GM12878 (cell line): ENCODE measurements at regions of chr3 and their contacts with region 1.

Region 1: DNA sequence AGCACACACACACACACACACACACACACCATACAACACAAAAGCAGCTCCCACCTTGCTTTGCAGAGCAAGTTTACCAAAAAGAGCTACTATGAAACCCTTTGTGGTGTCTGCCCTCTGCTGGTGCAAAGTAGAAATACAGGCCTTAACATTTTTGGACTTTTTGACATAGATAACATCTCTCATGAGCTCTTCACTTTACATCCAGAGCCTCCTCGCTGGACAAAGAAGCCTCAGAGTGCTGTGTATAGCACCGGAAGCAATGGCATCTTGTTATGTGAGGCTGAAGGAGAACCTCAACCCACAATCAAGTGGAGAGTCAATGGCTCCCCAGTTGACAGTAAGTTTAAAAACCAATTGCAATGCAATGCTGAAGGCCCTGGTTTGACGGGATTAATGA is 157.9 kb downstream of the CHL1 start:
- DNase-seq: peak; percentile 60
- ATAC-seq: peak; percentile 87
- H3K4me3 ChIP-seq: no peak overlapping the region
- H3K27ac ChIP-seq: no peak overlapping the region
- H3K4me1 ChIP-seq: no peaks in the 10 kb centered on the region
- H3K27me3 ChIP-seq: no peaks in the 10 kb centered on the region
- CTCF ChIP-seq: peak; percentile 72 to 84 (median 76)
- EP300 ChIP-seq: no peak
- POLR2A ChIP-seq: no peak
- RAD21 ChIP-seq: peak; percentile 94

Region 2: GRCh38 chr3:11734-12133 is 342.7 kb before region 1 on chr3:
- CTCF ChIA-PET with region 1: interaction called, 10 read pairs
- POLR2A ChIA-PET with region 1: no interaction called
- RAD21 ChIA-PET with region 1: interaction called, 17 read pairs
- SMC1A ChIA-PET with region 1: interaction called, 6 read pairs
- in situ Hi-C with region 1: no loop called
- intact Hi-C with region 1: no loop called
- DNase-seq: no peak
- ATAC-seq: no peak
- H3K4me3 ChIP-seq: no peak overlapping the region
- H3K27ac ChIP-seq: no peak overlapping the region
- H3K4me1 ChIP-seq: no peaks in the 10 kb centered on the region
- H3K27me3 ChIP-seq: no peaks in the 10 kb centered on the region
- CTCF ChIP-seq: no peak
- EP300 ChIP-seq: no peak
- POLR2A ChIP-seq: no peak
- RAD21 ChIP-seq: no peak

Region 3: GRCh38 chr3:72776-73175 is 281.7 kb before region 1 on chr3:
- CTCF ChIA-PET with region 1: interaction called, 15 read pairs
- POLR2A ChIA-PET with region 1: no interaction called
- RAD21 ChIA-PET with region 1: interaction called, 3 read pairs
- SMC1A ChIA-PET with region 1: interaction called, 21 read pairs
- in situ Hi-C with region 1: no loop called
- intact Hi-C with region 1: no loop called
- DNase-seq: no peak
- ATAC-seq: peak; percentile 56
- H3K4me3 ChIP-seq: no peak overlapping the region
- H3K27ac ChIP-seq: no peak overlapping the region
- H3K4me1 ChIP-seq: no peaks in the 10 kb centered on the region
- H3K27me3 ChIP-seq: no peaks in the 10 kb centered on the region; a peak in 1 of 4 replicates
- CTCF ChIP-seq: no peak
- EP300 ChIP-seq: no peak
- POLR2A ChIP-seq: no peak
- RAD21 ChIP-seq: no peak

Region 4: DNA sequence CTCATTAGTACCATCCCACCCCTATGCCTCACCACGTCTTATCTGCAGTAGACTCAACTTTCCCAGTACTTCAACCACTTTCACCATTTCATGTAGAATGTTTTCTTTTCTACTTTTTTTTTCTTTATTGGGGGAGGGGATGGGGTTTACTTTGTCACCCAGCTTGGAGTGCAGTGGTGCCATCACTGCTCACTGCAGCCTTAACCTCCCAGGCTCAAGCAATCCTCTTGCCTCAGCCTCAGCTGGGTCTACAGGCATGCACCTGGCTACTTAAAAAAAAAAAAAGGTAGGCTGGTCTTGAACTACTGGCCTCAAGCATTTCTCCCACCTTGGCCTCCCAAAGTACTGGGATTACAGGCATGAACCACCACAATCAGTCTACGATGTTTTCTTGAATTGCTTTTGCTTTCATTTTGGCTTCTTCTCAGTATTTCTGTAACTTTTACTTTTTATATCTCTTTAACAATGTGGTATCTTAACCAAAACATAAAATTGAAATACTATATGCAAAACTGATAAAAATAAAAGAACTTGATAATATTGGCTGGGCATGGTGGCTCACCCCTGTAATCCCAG is 202.7 kb before region 1 on chr3:
- CTCF ChIA-PET with region 1: interaction called, 14 read pairs
- POLR2A ChIA-PET with region 1: no interaction called
- RAD21 ChIA-PET with region 1: interaction called, 13 read pairs
- SMC1A ChIA-PET with region 1: interaction called, 26 read pairs
- in situ Hi-C with region 1: no loop called
- intact Hi-C with region 1: no loop called
- DNase-seq: no peak
- ATAC-seq: peak; percentile 67
- H3K4me3 ChIP-seq: no peak overlapping the region
- H3K27ac ChIP-seq: no peak overlapping the region
- H3K4me1 ChIP-seq: no peaks in the 10 kb centered on the region
- H3K27me3 ChIP-seq: no peaks in the 10 kb centered on the region
- CTCF ChIP-seq: no peak
- EP300 ChIP-seq: no peak
- POLR2A ChIP-seq: no peak
- RAD21 ChIP-seq: no peak

Region 5: GRCh38 chr3:212432-212831 is 142.0 kb before region 1 on chr3:
- CTCF ChIA-PET with region 1: interaction called, 69 read pairs
- POLR2A ChIA-PET with region 1: no interaction called
- RAD21 ChIA-PET with region 1: interaction called, 58 read pairs
- SMC1A ChIA-PET with region 1: interaction called, 109 read pairs
- in situ Hi-C with region 1: no loop called
- intact Hi-C with region 1: no loop called
- DNase-seq: peak; percentile 50
- ATAC-seq: peak; percentile 89
- H3K4me3 ChIP-seq: no peak overlapping the region
- H3K27ac ChIP-seq: no peak overlapping the region
- H3K4me1 ChIP-seq: no peaks in the 10 kb centered on the region
- H3K27me3 ChIP-seq: no peaks in the 10 kb centered on the region
- CTCF ChIP-seq: no peak
- EP300 ChIP-seq: peak in 1 of 2 experiments; percentile 46; a peak in 1 of 4 replicates
- POLR2A ChIP-seq: no peak
- RAD21 ChIP-seq: no peak

Region 6: GRCh38 chr3:288417-288816 is 66.0 kb before region 1 on chr3:
- CTCF ChIA-PET with region 1: interaction called, 32 read pairs
- POLR2A ChIA-PET with region 1: no interaction called
- RAD21 ChIA-PET with region 1: interaction called, 53 read pairs
- SMC1A ChIA-PET with region 1: interaction called, 64 read pairs
- in situ Hi-C with region 1: no loop called
- intact Hi-C with region 1: no loop called
- DNase-seq: no peak
- ATAC-seq: no peak
- H3K4me3 ChIP-seq: no peak overlapping the region
- H3K27ac ChIP-seq: no peak overlapping the region
- H3K4me1 ChIP-seq: peaks cover 10% of the 10 kb centered on the region
- H3K27me3 ChIP-seq: no peaks in the 10 kb centered on the region
- CTCF ChIP-seq: no peak
- EP300 ChIP-seq: no peak
- POLR2A ChIP-seq: no peak
- RAD21 ChIP-seq: no peak

Region 7: DNA sequence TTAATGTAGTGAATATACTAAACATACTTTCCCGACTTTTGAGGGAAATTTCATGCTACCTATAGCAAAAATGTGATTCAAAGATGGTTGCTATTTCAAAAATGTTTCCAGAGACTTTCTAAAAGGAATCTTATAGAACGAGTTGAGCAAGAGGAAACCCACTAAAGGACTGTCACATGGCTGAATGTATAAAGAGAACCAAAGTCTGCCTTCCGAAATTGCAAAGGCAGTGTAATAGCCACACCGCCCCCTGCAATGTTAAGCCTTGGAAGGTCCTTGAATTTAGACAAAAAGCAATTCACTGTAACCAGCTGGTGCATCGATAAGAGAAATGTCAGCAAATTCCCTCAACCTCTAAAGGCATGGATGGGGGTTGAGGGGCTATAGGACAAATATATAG is 15.1 kb before region 1 on chr3:
- CTCF ChIA-PET with region 1: interaction called, 18 read pairs
- POLR2A ChIA-PET with region 1: no interaction called
- RAD21 ChIA-PET with region 1: interaction called, 11 read pairs
- SMC1A ChIA-PET with region 1: interaction called, 17 read pairs
- in situ Hi-C with region 1: no loop called
- intact Hi-C with region 1: no loop called
- DNase-seq: no peak
- ATAC-seq: no peak
- H3K4me3 ChIP-seq: no peak overlapping the region
- H3K27ac ChIP-seq: no peak overlapping the region
- H3K4me1 ChIP-seq: no peaks in the 10 kb centered on the region
- H3K27me3 ChIP-seq: no peaks in the 10 kb centered on the region
- CTCF ChIP-seq: no peak
- EP300 ChIP-seq: no peak
- POLR2A ChIP-seq: no peak
- RAD21 ChIP-seq: no peak

Region 8: GRCh38 chr3:514192-514591 is 159.8 kb after region 1 on chr3:
- CTCF ChIA-PET with region 1: no interaction called
- POLR2A ChIA-PET with region 1: no interaction called
- RAD21 ChIA-PET with region 1: no interaction called
- SMC1A ChIA-PET with region 1: no interaction called
- in situ Hi-C with region 1: no loop called
- intact Hi-C with region 1: no loop called
- DNase-seq: no peak
- ATAC-seq: no peak
- H3K4me3 ChIP-seq: no peak overlapping the region
- H3K27ac ChIP-seq: no peak overlapping the region
- H3K4me1 ChIP-seq: no peaks in the 10 kb centered on the region
- H3K27me3 ChIP-seq: no peaks in the 10 kb centered on the region
- CTCF ChIP-seq: no peak
- EP300 ChIP-seq: no peak
- POLR2A ChIP-seq: no peak
- RAD21 ChIP-seq: no peak

Region 9: DNA sequence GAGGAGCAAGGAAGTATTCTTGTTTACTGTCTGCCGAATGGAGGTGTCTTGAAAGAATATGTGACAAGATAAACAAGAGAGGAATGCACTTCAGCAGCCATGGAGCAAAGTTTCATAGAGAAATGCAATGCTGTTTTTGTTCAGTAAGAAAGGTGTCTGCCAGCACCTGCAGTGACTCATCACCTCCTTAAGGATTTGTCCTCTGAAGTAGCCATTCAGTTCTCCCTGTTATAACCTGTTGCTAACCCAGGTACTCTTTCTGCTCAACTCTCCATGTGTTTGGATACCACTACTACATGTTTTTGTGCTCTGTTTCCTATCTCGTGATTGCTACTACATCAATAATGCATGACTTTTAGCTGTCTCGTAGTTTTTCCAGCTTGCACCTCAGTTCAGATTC is 171.0 kb after region 1 on chr3:
- CTCF ChIA-PET with region 1: no interaction called
- POLR2A ChIA-PET with region 1: no interaction called
- RAD21 ChIA-PET with region 1: no interaction called
- SMC1A ChIA-PET with region 1: no interaction called
- in situ Hi-C with region 1: no loop called
- intact Hi-C with region 1: no loop called
- DNase-seq: no peak
- ATAC-seq: no peak
- H3K4me3 ChIP-seq: no peak overlapping the region
- H3K27ac ChIP-seq: no peak overlapping the region
- H3K4me1 ChIP-seq: no peaks in the 10 kb centered on the region
- H3K27me3 ChIP-seq: no peaks in the 10 kb centered on the region
- CTCF ChIP-seq: no peak
- EP300 ChIP-seq: no peak
- POLR2A ChIP-seq: no peak
- RAD21 ChIP-seq: no peak